ENCODE measurements at regions of chr19 and their contacts with region 1.

Region 1: GRCh38 chr19:19170053-19170872 is at the start of gene MEF2B:
- DNase-seq: peak; percentile 59 to 96
- H3K4me3 ChIP-seq: peak within 1 kb of the TSS; percentile 15 to 59 (median 28); a peak in 7 of 8 replicates
- H3K27ac ChIP-seq: no peak within 1 kb of the TSS
- H3K4me1 ChIP-seq: peaks cover 0 to 23% (median 11%) of the 10 kb centered on the region in 4 experiments; a peak in 6 of 7 replicates
- H3K27me3 ChIP-seq: peaks cover 2 to 16% (median 11%) of the 10 kb centered on the region in 4 experiments
- CTCF ChIP-seq: no peak
- EP300 ChIP-seq: no peak
- POLR2A ChIP-seq: peak in 1 of 2 experiments; percentile 34; a peak in 1 of 3 replicates
- RAD21 ChIP-seq: 0 out of 4 replicates have a peak, but pooled peaks of 1 of the 2 experiments have one; percentile 4
- total RNA-seq, gene MEF2B: 2.8 and 4.1 TPM in 2 replicates

Region 2: GRCh38 chr19:19138169-19138981 is 31.9 kb before region 1 on chr19 and contains the start of gene TMEM161A:
- CTCF ChIA-PET with region 1: interaction called, 40 read pairs
- POLR2A ChIA-PET with region 1: interaction called, 12 read pairs
- DNase-seq: peak; percentile 88 to 98
- H3K4me3 ChIP-seq: peak within 1 kb of the TSS; percentile 67 to 96 (median 72)
- H3K27ac ChIP-seq: no peak within 1 kb of the TSS
- H3K4me1 ChIP-seq: peaks cover 0 to 14% (median 10%) of the 10 kb centered on the region in 4 experiments; a peak in 6 of 7 replicates
- H3K27me3 ChIP-seq: peaks cover 0 to 3% (median 0%) of the 10 kb centered on the region in 4 experiments; a peak in 4 of 7 replicates
- CTCF ChIP-seq: no peak
- EP300 ChIP-seq: no peak
- POLR2A ChIP-seq: peak in 1 of 2 experiments; percentile 54; a peak in 1 of 3 replicates
- RAD21 ChIP-seq: no peak
- total RNA-seq, gene TMEM161A: 41.9 and 47.8 TPM in 2 replicates

Region 3: DNA sequence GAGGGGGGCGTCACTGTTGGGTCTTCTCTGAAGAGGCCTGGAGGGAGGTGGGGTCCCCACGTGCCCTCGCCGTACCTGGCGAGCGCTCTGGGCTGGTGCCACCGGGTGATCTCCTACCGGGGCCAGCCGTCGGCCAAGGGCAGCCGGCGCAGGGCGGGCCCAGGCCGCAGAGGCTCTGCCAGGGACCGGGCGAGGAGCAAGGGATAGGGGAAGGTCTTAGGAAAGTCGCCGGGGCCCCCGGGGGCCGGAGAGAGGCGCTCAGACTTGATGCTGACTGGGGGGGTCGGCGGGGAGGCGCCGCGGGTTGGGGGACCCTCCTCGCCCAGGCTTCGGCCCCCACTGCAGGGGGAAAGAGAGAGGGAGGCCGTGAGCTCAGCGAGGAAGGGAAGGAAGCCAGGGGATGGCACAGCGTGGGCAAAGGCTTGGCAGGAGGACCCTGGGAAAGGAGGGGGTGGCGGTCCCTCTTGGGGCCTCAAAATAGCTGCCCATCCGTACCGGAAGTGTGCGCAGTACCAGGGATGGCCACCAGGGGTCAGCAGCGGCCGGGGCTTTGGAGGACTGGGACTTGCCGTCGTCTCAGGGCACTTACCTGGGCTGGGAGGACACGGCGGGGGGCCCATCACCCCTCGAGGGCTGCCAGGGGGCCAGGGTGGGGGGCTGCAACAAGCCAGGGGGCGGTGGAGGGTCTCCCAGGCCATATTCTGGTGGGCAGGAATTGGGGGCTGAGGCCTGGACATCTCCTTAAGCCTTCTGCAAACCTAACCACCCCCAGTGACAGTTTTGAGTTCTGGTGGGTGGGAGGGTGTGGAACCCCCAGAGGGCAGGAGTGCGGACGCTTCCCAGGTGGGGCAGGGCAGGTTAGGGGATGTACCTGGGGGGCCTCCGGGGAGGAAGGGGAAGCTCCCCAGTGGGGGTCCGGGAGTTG is 24.3 kb before region 1 on chr19:
- CTCF ChIA-PET with region 1: interaction called, 85 read pairs
- POLR2A ChIA-PET with region 1: interaction called, 19 read pairs
- DNase-seq: peak; percentile 67 to 100
- H3K4me3 ChIP-seq: peak overlapping the region in 1 of 4 experiments; percentile 29; a peak in 2 of 8 replicates
- H3K27ac ChIP-seq: no peak overlapping the region
- H3K4me1 ChIP-seq: peaks cover 0 to 2% (median under 1%) of the 10 kb centered on the region in 4 experiments; a peak in 2 of 7 replicates
- H3K27me3 ChIP-seq: no peaks in the 10 kb centered on the region; a peak in 1 of 7 replicates
- CTCF ChIP-seq: peak; percentile 96 to 99 (median 97)
- EP300 ChIP-seq: no peak
- POLR2A ChIP-seq: no peak
- RAD21 ChIP-seq: peak; percentile 93 to 94

Region 4: GRCh38 chr19:19155495-19156219 is 14.6 kb before region 1 on chr19:
- CTCF ChIA-PET with region 1: interaction called, 109 read pairs
- POLR2A ChIA-PET with region 1: interaction called, 133 read pairs
- DNase-seq: no peak
- H3K4me3 ChIP-seq: no peak overlapping the region
- H3K27ac ChIP-seq: no peak overlapping the region
- H3K4me1 ChIP-seq: peaks cover 0 to 4% (median 1%) of the 10 kb centered on the region in 4 experiments; a peak in 4 of 7 replicates
- H3K27me3 ChIP-seq: no peaks in the 10 kb centered on the region; a peak in 1 of 7 replicates
- CTCF ChIP-seq: no peak
- EP300 ChIP-seq: no peak
- POLR2A ChIP-seq: no peak
- RAD21 ChIP-seq: no peak